K562 (cell line): ENCODE measurements at regions of chr10 and their contacts with region 1.

Region 1: DNA sequence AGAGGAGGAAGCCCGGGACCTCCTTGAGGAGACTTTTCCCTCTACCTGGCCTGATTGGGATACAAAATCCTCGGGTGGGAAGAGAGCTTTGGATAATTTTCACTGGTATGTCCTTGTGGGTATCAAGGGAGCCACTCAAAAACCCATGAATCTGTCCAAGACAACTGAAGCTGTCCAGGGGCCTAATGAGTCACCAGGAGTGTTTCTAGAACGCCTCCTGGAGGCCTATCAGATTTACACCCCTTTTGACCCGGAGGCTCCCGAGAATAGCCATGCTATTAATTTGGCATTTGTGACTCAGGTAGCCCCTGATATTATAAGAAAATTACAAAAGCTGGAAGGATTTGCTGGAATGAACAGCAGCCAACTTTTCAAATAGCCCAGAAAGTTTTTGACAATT is 38.6 kb downstream of the ZNF25 start:
- DNase-seq: peak in 3 of 4 experiments; percentile 9 to 16 (median 15)
- ATAC-seq: peak; percentile 64
- H3K4me3 ChIP-seq: no peak overlapping the region
- H3K27ac ChIP-seq: no peak overlapping the region
- H3K4me1 ChIP-seq: no peaks in the 10 kb centered on the region
- H3K27me3 ChIP-seq: peaks cover 0 to 7% of the 10 kb centered on the region in 2 experiments; a peak in 1 of 5 replicates
- CTCF ChIP-seq: peak; percentile 22 to 38 (median 24); a peak in 3 of 6 replicates
- EP300 ChIP-seq: no peak
- POLR2A ChIP-seq: no peak
- RAD21 ChIP-seq: no peak

Region 2: DNA sequence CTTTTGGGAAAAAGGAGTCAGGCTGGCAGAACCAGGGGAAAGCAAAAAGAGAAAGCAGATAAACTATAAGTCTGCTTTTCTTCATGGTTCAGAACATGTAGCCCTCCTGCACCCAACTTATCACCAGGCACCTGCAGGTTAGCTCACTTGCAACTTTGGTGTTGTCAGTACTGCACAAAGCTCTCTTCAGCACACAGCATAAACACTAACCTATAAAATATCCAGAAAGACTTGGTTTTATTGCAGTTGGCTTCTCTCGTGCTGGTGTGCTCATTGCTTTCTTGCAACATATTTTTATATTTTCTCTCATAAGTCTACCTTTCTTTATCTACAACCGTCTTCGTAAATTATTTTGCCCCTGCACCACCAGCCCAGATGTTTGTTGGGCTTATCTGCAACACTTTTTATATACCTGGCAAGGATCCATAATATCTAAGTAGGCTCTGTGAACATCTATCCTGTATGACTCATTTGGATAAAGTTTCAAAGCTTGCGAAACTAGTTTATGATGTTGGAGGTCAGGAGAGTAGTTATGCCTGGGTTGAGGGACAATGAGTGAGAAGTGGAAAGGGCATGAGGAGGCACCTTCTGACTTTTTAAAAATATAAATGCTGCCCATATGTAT is 647.9 kb before region 1 on chr10:
- CTCF ChIA-PET with region 1: no interaction called
- POLR2A ChIA-PET with region 1: no interaction called
- in situ Hi-C with region 1: no loop called
- intact Hi-C with region 1: no loop called
- DNase-seq: no peak
- ATAC-seq: no peak
- H3K4me3 ChIP-seq: no peak overlapping the region
- H3K27ac ChIP-seq: no peak overlapping the region
- H3K4me1 ChIP-seq: no peaks in the 10 kb centered on the region
- H3K27me3 ChIP-seq: no peaks in the 10 kb centered on the region
- CTCF ChIP-seq: no peak
- EP300 ChIP-seq: no peak
- POLR2A ChIP-seq: no peak
- RAD21 ChIP-seq: no peak

Region 3: DNA sequence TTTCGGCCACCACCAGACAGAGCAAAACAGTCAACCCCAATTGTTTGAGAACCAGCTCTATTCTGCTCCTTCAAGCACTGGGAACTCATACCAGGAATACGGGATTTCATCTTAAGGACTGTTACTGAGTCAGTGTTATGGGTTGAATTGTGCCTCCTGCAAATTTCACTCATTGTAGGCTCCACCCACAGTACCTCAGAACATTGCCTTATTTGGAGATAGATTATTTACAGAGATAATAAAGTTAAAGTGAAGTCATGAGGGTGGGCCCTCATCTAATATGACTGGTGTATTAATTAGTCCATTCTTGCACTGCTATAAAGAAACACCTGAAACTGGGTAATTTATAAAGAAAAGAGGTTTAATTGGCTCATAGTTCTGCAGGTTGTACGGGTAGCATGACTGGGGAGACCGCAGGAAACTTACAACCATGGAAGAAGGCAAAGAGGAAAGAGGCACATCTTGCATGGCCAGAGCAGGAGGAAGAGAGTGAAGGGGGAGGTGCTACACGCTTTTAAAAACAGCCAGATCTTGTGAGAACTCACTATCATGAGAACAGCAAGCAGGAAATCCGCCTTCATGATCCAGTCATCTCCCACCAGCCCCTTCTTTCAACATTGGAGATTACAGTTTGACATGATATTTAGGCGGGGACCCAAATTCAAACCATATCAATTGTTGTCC is 66.2 kb before region 1 on chr10:
- CTCF ChIA-PET with region 1: no interaction called
- POLR2A ChIA-PET with region 1: no interaction called
- in situ Hi-C with region 1: no loop called
- intact Hi-C with region 1: loop called (anchors 10 kb)
- DNase-seq: peak in 1 of 4 experiments; percentile 54
- ATAC-seq: peak; percentile 83
- H3K4me3 ChIP-seq: peak overlapping the region; percentile 27; the same call in 1 of the 2 replicates
- H3K27ac ChIP-seq: peak overlapping the region; percentile 94
- H3K4me1 ChIP-seq: peaks cover 0 to 5% of the 10 kb centered on the region in 2 experiments; a peak in 2 of 5 replicates
- H3K27me3 ChIP-seq: no peaks in the 10 kb centered on the region
- CTCF ChIP-seq: no peak
- EP300 ChIP-seq: no peak
- POLR2A ChIP-seq: peak; percentile 52
- RAD21 ChIP-seq: no peak